Left cardiac atrium (tissue), 4 donors: ENCODE measurements at regions of chr7 and their contacts with region 1.

Region 1: GRCh38 chr7:106793015-106793975 is 71.8 kb upstream of the PIK3CG start:
- DNase-seq: no peak
- ATAC-seq: no peak

Region 2: GRCh38 chr7:106824458-106824857 is 31.2 kb after region 1 on chr7:
- intact Hi-C with region 1: no loop called
- DNase-seq: no peak
- ATAC-seq: no peak

Region 3: DNA sequence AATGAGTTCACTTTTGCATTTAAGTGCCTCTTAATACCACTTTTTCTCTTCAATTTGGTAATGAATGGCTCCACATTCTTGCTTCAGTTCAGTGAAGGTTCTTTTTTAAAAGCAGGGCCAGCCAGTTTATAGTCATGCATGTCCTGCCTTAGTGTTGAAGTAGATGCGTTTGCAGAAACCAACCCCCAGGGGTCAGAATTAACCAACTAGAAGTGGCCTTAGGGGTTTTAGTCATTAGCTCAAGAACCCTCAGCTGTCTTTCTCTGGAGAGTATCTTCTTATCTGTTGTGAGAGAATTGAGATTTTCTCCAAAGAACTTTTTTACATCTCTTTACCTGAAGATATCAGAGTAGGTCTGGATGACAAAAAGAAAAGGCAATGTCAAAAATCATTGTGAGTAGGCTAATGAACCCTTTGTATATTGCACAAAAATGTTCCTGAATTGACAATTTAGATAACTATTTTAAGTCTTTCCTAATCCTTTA is 154.0 kb after region 1 on chr7:
- intact Hi-C with region 1: loop called in 1 of 2 experiments (anchors 5 kb)
- DNase-seq: peak; percentile 40
- ATAC-seq: peak; percentile 91 to 93